Naive thymus-derived CD4-positive, alpha-beta T cell (primary cell): ENCODE measurements at regions of chr10 and their contacts with region 1.

Region 1: DNA sequence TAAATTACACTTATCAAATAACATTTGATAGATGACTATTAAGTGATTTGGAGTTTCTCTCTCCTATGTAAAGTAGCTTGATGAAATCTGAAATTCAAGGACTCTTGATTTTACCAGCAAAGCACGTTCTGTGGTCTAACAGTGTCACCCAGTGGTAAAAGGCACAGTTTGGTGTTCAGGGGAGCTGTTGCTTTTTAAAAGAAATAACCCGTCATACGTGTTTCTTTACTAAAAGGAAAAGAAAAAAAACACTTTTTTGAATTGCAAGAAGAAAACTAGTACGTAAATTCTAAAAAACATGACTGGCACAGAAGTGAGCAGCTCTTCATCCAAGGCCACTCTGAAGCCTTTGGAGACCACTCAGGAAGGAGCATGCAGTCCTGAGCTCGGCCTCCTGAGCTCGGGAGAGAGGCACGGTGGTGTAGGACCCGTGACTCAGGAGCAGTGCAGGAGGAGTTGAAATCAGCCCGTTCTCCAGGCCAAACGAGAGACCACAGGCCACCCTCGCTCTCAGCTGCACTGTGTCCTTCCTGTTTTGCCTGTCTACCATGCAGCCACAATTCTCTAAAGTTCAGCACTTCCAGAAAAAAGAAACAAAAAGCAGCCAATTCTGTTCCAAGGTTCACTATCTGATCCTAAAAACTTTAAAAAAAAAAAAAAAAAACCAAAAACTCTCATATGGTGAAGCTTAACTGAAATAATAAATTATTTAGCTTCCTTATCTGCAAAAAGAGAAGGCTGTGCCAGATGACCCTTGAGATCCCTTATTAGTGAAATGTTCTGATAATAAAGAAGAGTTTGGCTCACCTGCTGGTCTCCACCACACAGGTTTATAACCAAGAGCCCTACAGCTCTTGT is 212.6 kb upstream of the FRMD4A start:
- DNase-seq: peak in 7 of 9 donors; percentile 60 to 81 (median 73)
- ATAC-seq: peak; percentile 86
- H3K4me3 ChIP-seq: peak overlapping the region; percentile 28
- H3K4me3 Mint-ChIP-seq: peak overlapping the region; percentile 46 to 82 (median 76)
- H3K27ac ChIP-seq: peak overlapping the region; percentile 72
- H3K27ac Mint-ChIP-seq: peak overlapping the region; percentile 73 to 96 (median 84)
- H3K4me1 ChIP-seq: peaks cover 23 to 42% of the 10 kb centered on the region in 2 donors
- H3K4me1 Mint-ChIP-seq: peaks cover 57 to 97% (median 94%) of the 10 kb centered on the region in 7 donors
- H3K27me3 ChIP-seq: no peaks in the 10 kb centered on the region
- H3K27me3 Mint-ChIP-seq: no peaks in the 10 kb centered on the region

Region 2: DNA sequence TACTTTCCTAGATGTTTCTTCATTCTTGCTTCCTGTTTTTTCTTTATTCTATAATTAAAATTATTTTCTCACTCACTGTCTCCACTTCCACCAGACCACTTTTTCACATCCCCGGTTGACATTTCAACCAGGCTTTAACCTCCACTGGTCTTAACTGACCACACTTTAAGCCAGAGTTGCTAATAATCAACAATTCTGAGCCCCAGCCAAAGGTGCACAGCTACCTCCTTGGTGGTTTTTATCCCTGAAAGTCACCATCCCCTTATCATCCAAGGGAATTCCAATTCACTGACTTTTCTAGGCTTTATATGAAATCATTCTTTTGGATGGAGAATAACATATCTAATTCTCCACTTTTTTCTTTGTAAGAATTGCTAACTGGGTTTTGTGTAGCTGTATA is 351.4 kb before region 1 on chr10:
- CTCF ChIA-PET with region 1: interaction called, 6 read pairs
- POLR2A ChIA-PET with region 1: no interaction called
- intact Hi-C with region 1: loop called (anchors 1 to 2 kb)
- DNase-seq: no peak
- ATAC-seq: no peak
- H3K4me3 ChIP-seq: no peak overlapping the region
- H3K4me3 Mint-ChIP-seq: no peak overlapping the region
- H3K27ac ChIP-seq: no peak overlapping the region
- H3K27ac Mint-ChIP-seq: no peak overlapping the region
- H3K4me1 ChIP-seq: no peaks in the 10 kb centered on the region
- H3K4me1 Mint-ChIP-seq: peaks cover 0 to 4% (median under 1%) of the 10 kb centered on the region in 7 donors
- H3K27me3 ChIP-seq: no peaks in the 10 kb centered on the region
- H3K27me3 Mint-ChIP-seq: peaks cover 0 to 72% (median 18%) of the 10 kb centered on the region in 5 donors

Region 3: DNA sequence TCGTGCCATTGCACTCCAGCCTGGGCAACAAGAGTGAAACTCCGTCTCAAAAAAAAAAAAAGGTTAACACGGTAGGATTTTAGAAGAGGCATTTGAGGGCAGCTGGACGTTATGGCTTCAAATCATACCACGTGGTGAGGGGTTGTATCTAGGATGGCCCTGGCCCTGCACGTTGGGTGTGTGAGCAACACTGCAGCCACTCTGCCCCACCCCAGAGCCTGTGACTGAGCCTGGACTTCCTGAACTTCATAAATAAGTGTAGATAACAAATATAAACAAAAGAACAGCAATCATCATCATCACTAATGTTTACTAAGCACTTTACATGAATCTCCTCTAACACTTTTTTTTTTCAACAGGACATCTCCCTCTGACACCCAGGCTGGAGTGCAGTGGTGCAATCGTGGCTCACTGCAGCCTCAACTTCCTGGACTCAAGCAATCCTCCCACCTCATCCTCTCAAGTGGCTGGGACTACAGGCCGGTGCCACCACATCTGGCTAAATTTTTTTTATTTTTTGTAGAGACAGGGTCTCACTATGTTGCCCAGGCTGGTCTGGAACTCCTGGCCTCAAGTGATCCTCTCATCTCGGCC is 43.0 kb before region 1 on chr10:
- CTCF ChIA-PET with region 1: interaction called, 8 read pairs
- POLR2A ChIA-PET with region 1: no interaction called
- intact Hi-C with region 1: loop called (anchors 1 kb)
- DNase-seq: no peak
- ATAC-seq: no peak
- H3K4me3 ChIP-seq: no peak overlapping the region
- H3K4me3 Mint-ChIP-seq: no peak overlapping the region
- H3K27ac ChIP-seq: no peak overlapping the region
- H3K27ac Mint-ChIP-seq: peak overlapping the region in 4 of 9 donors; percentile 28 to 56 (median 40)
- H3K4me1 ChIP-seq: no peaks in the 10 kb centered on the region
- H3K4me1 Mint-ChIP-seq: peaks cover 4 to 15% (median 6%) of the 10 kb centered on the region in 7 donors
- H3K27me3 ChIP-seq: no peaks in the 10 kb centered on the region
- H3K27me3 Mint-ChIP-seq: peaks cover 0 to 12% (median 0%) of the 10 kb centered on the region in 5 donors

Region 4: DNA sequence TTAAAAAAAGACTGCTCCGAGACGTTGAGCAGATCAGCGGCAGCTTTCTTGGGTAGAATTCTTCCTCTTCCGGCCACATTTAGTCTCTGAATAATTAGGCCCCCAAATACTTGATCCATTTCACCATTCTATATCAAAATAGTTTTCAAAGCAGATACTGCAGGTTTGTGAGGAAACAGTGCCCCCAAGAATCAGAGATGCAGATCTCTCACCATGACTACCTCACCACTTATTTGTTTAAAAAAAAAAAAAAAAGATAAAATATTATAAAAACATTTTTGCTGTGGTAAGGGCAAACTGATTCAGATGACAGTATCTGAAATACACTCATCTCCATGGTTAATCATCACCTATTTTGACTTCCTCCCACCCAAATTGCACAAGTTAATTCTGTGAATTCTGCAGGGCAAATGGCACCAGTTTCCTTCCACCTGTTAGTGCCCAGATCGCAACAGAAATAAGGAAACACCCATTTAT is 21.0 kb after region 1 on chr10:
- CTCF ChIA-PET with region 1: interaction called, 5 read pairs
- POLR2A ChIA-PET with region 1: interaction called, 17 read pairs
- intact Hi-C with region 1: loop called in 1 of 2 experiments (anchors 2 kb)
- DNase-seq: peak in 6 of 9 donors; percentile 42 to 62 (median 58)
- ATAC-seq: peak; percentile 64
- H3K4me3 ChIP-seq: peak overlapping the region; percentile 51
- H3K4me3 Mint-ChIP-seq: peak overlapping the region; percentile 76 to 93 (median 86)
- H3K27ac ChIP-seq: peak overlapping the region; percentile 82
- H3K27ac Mint-ChIP-seq: peak overlapping the region; percentile 92 to 99 (median 96)
- H3K4me1 ChIP-seq: peaks cover 78 to 80% of the 10 kb centered on the region in 2 donors
- H3K4me1 Mint-ChIP-seq: peaks cover 84 to 100% (median 92%) of the 10 kb centered on the region in 7 donors
- H3K27me3 ChIP-seq: no peaks in the 10 kb centered on the region
- H3K27me3 Mint-ChIP-seq: no peaks in the 10 kb centered on the region

Region 5: GRCh38 chr10:14583252-14583651 is 40.0 kb after region 1 on chr10:
- CTCF ChIA-PET with region 1: interaction called, 21 read pairs
- POLR2A ChIA-PET with region 1: interaction called, 13 read pairs
- intact Hi-C with region 1: loop called in 1 of 2 experiments (anchors 2 kb)
- DNase-seq: peak; percentile 47 to 92 (median 87)
- ATAC-seq: peak; percentile 79
- H3K4me3 ChIP-seq: peak overlapping the region; percentile 10
- H3K4me3 Mint-ChIP-seq: peak overlapping the region; percentile 76 to 90 (median 82)
- H3K27ac ChIP-seq: peak overlapping the region; percentile 83
- H3K27ac Mint-ChIP-seq: peak overlapping the region; percentile 96 to 100 (median 99)
- H3K4me1 ChIP-seq: peaks cover 75 to 77% of the 10 kb centered on the region in 2 donors
- H3K4me1 Mint-ChIP-seq: peaks cover 69 to 99% (median 92%) of the 10 kb centered on the region in 7 donors
- H3K27me3 ChIP-seq: no peaks in the 10 kb centered on the region
- H3K27me3 Mint-ChIP-seq: no peaks in the 10 kb centered on the region